MCF 10A (cell line): ENCODE measurements at regions of chr11 and their contacts with region 1.

Region 1: GRCh38 chr11:6389921-6390724 is at the start of gene SMPD1:
- DNase-seq: peak; percentile 91
- H3K4me3 Mint-ChIP-seq: peak within 1 kb of the TSS; percentile 94
- H3K27ac Mint-ChIP-seq: peak within 1 kb of the TSS; percentile 96
- H3K4me1 Mint-ChIP-seq: peaks cover 29% of the 10 kb centered on the region
- H3K27me3 Mint-ChIP-seq: no peaks in the 10 kb centered on the region
- CTCF ChIP-seq: no peak
- total RNA-seq, gene SMPD1: 15.0 and 32.2 TPM in 2 replicates

Region 2: DNA sequence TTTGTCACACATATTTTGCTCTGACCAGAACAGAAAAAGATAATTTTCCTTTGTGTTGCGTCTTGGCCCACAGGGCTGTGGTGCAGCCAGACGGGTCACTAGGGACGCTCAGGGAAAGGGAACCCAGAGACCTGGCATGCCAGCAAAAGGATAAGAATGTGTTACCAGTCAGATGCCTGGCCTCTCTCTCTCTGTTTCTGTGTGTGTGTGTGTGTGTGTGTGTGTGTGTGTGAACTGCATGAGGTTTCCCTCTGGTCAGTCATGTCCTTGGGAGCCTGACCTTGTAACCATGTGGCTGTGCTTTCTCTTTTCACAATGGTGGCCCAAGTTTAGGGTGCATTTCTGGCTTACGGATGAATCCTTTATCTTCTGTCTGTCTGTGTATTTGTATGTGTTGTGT is 105.1 kb before region 1 on chr11:
- CTCF ChIA-PET with region 1: no interaction called
- POLR2A ChIA-PET with region 1: no interaction called
- intact Hi-C with region 1: no loop called
- DNase-seq: no peak
- H3K4me3 Mint-ChIP-seq: no peak overlapping the region
- H3K27ac Mint-ChIP-seq: no peak overlapping the region
- H3K4me1 Mint-ChIP-seq: peaks cover 10% of the 10 kb centered on the region
- H3K27me3 Mint-ChIP-seq: peaks cover 11% of the 10 kb centered on the region
- CTCF ChIP-seq: no peak

Region 3: GRCh38 chr11:6315811-6316425 is 74.2 kb before region 1 on chr11:
- CTCF ChIA-PET with region 1: interaction called, 3 read pairs
- POLR2A ChIA-PET with region 1: interaction called, 11 read pairs
- intact Hi-C with region 1: no loop called
- DNase-seq: peak; percentile 73
- H3K4me3 Mint-ChIP-seq: no peak overlapping the region
- H3K27ac Mint-ChIP-seq: no peak overlapping the region
- H3K4me1 Mint-ChIP-seq: peaks cover 18% of the 10 kb centered on the region
- H3K27me3 Mint-ChIP-seq: no peaks in the 10 kb centered on the region
- CTCF ChIP-seq: peak; percentile 80

Region 4: DNA sequence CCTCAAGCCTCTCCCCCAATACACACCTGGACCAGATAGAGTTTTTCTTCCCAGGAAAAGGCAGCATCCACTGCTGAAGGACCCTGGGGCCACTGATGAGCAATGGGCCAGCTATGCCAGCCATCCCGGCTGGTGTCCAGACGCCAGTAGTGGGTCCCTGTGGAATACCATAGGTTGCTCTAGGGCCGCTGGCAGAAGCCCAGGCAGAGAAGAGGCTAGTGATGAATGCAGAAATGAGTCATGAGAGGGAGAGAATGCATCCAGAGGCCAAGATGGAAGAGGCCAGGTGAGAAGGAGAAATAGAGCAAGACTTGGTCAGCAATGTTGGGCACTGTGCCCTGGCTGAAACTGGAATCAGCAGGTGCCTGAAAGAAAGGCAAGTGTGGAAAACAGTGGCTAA is 41.7 kb after region 1 on chr11:
- CTCF ChIA-PET with region 1: interaction called, 3 read pairs
- POLR2A ChIA-PET with region 1: interaction called, 6 read pairs
- intact Hi-C with region 1: loop called (anchors 1 kb)
- DNase-seq: peak; percentile 98
- H3K4me3 Mint-ChIP-seq: no peak overlapping the region
- H3K27ac Mint-ChIP-seq: no peak overlapping the region
- H3K4me1 Mint-ChIP-seq: peaks cover 12% of the 10 kb centered on the region
- H3K27me3 Mint-ChIP-seq: no peaks in the 10 kb centered on the region
- CTCF ChIP-seq: no peak

Region 5: DNA sequence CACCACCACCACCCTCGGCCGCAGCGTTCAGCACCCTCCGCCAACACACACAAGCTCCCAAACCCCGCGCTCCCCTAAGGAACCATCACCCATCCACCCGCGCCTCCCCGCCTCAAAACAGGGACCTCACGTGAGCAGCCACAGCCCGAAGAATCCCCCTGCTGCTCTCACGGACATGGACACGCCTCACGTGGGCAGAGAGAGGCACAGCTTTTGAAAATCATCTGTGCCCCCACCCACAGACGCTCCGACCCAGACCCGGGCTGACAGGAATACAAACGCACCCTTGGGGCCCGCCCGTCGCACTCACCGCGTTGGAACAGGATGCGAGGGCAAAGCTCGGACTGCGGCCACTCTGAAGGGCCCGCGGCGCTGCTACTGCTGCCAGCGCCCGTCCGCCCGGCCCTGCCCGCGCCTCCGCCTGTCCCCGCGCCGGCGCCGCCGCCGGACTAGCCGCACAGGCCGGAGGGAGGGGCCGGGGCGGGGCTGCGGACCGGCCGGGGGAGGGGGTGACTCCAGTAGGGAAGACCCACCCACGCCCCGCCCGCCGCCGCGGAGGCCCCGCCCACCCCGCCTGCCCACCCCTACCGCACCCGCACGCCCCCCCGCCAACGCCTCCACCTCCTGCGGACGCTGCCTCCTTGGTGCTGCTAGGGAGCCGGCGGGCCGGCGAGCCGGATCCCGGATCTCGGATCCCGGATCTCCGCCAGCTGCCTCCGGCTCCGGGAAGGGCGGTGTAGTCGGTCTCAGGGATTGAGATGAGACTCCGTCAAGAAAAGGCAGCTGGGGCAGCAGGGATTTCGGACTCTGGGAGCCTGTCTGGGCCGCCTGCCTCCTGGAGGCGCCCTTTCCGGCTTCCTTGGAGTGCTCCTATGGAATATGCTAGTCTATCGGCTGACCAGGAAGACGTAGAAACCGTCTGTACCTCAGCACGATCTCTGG is 83.6 kb after region 1 on chr11 and contains the start of gene TRIM3:
- CTCF ChIA-PET with region 1: interaction called, 3 read pairs
- POLR2A ChIA-PET with region 1: interaction called, 10 read pairs
- intact Hi-C with region 1: no loop called
- DNase-seq: peak; percentile 83
- H3K4me3 Mint-ChIP-seq: peak within 1 kb of the TSS; percentile 83
- H3K27ac Mint-ChIP-seq: peak within 1 kb of the TSS; percentile 87
- H3K4me1 Mint-ChIP-seq: peaks cover 11% of the 10 kb centered on the region
- H3K27me3 Mint-ChIP-seq: no peaks in the 10 kb centered on the region
- CTCF ChIP-seq: no peak
- total RNA-seq, gene TRIM3: 7.3 and 7.4 TPM in 2 replicates

Region 6: DNA sequence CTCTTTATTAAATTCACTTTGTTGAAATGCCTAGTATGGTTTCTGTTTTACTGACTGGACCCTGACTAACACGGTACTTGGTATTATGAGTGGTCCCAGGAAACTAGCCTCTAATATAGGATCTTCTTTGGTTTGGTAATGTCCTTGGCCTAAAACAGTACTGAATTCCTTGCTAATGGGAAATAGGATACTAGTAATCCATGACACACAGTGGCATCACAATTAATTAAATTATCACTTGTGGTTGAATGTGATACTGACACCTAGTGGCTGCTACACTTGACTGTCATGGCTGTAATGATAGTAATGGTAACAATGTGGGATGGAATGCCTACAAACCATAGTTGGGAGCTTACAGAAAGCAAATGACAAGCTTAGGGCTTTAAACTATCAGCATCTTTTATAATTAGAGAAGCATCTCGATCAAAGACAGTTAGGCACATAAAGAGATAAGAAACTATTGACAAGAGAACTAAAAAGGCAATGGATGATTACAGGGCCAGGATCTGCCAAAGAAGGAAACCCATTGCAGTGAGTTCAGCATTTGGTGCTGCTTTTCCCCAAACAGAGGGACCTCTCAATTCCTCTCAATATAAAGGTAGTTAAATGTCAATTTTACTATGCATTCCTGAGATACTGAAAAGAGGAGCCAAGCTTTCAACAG is 115.6 kb after region 1 on chr11:
- CTCF ChIA-PET with region 1: interaction called, 10 read pairs
- POLR2A ChIA-PET with region 1: no interaction called
- intact Hi-C with region 1: no loop called
- DNase-seq: peak; percentile 64
- H3K4me3 Mint-ChIP-seq: no peak overlapping the region
- H3K27ac Mint-ChIP-seq: no peak overlapping the region
- H3K4me1 Mint-ChIP-seq: no peaks in the 10 kb centered on the region
- H3K27me3 Mint-ChIP-seq: no peaks in the 10 kb centered on the region
- CTCF ChIP-seq: peak; percentile 52

Region 7: DNA sequence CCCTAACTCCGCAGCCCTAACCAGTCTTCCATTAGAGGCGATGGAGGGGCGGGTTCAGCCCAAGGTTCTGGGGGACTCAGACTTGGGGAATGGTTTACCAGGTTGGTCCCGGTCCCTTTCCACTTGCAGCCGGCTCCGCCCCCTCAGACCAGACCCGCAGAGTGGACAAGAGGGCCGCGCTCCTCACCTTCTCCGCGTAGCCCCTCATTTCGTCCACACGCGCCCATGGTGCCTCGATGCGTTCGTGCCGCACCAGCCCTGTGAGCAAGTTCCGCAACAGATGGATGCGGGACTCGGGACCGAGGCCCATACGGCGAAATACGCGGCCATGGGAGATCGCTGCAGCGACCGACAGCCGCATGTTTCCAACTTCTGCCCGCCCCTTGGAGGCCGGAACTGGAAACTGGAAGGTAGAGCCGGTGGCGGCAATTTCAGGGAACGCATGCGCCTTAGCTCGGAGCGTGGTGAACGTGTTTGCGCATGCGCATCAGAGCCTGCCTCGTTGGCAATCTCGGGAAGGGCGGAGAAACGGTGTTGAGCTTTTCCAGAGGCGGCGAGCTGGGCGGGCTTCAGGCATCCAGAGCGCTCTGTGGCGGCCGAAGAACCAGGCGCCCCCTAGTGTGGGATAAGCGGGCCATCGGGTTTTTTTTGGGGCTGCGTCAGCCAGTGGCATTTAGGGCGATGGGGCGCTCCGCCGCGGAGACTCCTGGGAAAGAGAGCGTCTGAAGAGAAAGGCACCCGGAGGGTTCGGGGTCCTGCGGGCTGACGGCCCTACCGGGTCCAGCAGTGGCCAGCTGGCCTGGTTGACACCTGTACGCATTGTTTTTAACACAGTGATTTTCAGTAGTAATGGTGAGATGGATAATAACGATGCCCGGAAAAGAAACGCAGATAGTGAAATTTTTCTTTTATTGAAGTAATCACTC is 293.1 kb after region 1 on chr11 and contains the start of gene MRPL17:
- CTCF ChIA-PET with region 1: interaction called, 3 read pairs
- POLR2A ChIA-PET with region 1: interaction called, 4 read pairs
- intact Hi-C with region 1: loop called (anchors 5 kb)
- DNase-seq: peak; percentile 99
- H3K4me3 Mint-ChIP-seq: peak within 1 kb of the TSS; percentile 100
- H3K27ac Mint-ChIP-seq: peak within 1 kb of the TSS; percentile 95
- H3K4me1 Mint-ChIP-seq: peaks cover 12% of the 10 kb centered on the region
- H3K27me3 Mint-ChIP-seq: no peaks in the 10 kb centered on the region
- CTCF ChIP-seq: peak; percentile 75
- total RNA-seq, gene MRPL17: 78.0 and 88.4 TPM in 2 replicates